K562 (cell line): ENCODE measurements at regions of chr3 and their contacts with region 1.

Region 1: DNA sequence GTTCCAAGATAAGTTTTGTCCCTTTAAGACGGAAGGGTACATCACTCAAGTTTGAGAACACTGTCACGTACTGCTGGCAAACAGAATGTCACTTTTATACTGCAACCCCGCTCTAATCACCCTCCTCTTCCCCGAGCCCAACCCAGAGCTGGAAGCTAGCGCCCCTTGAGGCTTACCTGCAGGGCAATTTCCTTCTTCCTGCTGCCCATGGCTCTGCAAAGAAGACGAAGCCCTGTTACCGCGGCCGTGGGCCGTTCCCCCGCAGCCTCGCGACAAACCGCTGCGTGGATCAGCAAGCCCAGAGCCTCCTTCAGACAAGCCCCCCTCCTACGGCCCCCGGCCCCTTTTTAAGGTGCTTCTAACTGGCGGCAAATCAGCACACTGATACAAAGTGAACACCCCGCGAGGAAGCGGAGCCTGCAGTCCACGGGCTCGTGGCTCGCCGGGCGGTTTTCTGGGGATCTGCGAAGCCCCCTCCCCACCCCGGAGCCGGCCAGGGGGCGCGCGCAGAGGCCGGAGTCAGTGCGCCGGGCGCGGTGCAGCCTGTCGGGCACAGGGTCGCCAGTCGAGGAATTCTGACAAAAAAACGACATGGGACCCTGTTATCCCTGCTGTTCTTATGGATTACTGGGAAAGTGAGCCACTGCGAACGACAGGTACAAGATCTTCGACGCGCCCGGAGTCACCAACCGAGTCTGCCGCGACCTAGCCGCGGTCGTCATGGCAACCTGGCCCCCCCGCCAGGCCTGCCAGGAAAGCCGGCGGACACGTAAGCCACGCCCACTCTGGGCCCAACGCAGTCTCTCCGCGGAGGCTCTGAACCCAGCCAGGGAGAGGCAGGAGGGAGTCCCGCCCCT is at the start of gene NME9:
- DNase-seq: peak; percentile 86 to 95 (median 92)
- ATAC-seq: peak; percentile 94
- H3K4me3 ChIP-seq: peak within 1 kb of the TSS; percentile 57
- H3K27ac ChIP-seq: no peak within 1 kb of the TSS
- H3K4me1 ChIP-seq: peaks cover 7 to 10% of the 10 kb centered on the region in 2 experiments; a peak in 4 of 5 replicates
- H3K27me3 ChIP-seq: no peaks in the 10 kb centered on the region; a peak in 1 of 5 replicates
- CTCF ChIP-seq: peak; percentile 59 to 72 (median 69)
- EP300 ChIP-seq: no peak
- POLR2A ChIP-seq: no peak
- RAD21 ChIP-seq: peak in 1 of 2 experiments; percentile 47; a peak in 2 of 4 replicates
- polyA plus RNA-seq, gene NME9: 0.13 to 0.15 TPM

Region 2: DNA sequence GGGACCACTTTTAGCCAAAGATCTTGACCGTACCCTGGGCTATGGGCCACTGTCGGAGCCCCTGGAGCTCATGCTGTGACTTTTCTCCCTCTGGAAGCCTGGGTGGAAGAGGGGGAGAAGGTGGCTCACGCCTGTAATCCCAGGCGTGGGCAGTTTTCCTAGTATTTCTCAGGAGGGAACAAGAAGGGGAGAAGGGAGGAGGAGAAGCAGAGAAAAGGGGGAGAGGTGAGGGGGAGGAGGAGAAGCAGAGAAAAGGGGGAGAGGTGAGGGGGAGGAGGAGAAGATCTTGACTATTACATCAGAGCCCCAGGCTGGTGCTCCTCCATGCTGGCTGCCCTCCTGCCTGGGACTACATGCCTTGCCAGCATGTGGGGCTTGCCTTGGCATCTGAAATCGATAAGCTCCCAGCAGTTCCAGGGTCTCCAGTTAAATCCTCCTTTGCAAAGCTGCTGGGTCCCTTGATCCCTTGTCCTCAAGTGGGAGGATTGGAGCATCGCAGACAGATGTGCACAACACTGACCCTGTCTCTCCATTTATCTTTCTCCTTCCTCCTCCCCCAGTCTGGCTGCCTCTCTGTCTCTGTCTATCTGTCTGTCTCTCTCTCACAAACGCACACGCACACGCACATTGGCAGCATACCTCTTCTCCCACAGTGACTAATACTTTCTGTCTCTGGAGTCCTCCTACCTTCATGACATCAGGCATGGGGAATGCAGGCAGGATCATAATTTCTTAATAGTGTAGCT is 60.7 kb after region 1 on chr3:
- CTCF ChIA-PET with region 1: no interaction called
- POLR2A ChIA-PET with region 1: no interaction called
- in situ Hi-C with region 1: no loop called
- intact Hi-C with region 1: loop called (anchors 10 kb)
- DNase-seq: no peak
- ATAC-seq: no peak; the same call in 2 of the 3 replicates
- H3K4me3 ChIP-seq: no peak overlapping the region
- H3K27ac ChIP-seq: no peak overlapping the region
- H3K4me1 ChIP-seq: no peaks in the 10 kb centered on the region
- H3K27me3 ChIP-seq: peaks cover 0 to 12% of the 10 kb centered on the region in 2 experiments; a peak in 1 of 5 replicates
- CTCF ChIP-seq: no peak
- EP300 ChIP-seq: no peak
- POLR2A ChIP-seq: no peak
- RAD21 ChIP-seq: no peak

Region 3: DNA sequence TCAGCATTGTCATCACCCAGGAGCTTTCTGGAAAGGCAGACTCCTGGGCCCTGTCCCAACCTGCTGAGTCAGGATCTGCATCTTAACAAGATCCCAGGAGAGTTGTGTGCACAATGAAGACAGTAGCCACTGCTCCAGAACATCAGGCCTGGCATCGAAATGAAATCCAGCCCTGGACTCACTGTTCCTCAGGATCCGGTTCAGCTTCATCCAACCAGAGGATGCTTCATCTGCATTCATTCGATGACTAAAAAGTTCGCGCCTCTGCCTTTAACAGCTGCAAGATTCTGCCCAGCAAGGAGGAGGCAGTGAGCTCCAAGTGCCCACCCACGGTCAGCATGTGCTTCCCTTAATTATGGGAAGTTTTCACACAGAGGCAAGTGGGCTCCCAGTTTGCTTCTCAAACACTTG is 79.4 kb after region 1 on chr3:
- CTCF ChIA-PET with region 1: no interaction called
- POLR2A ChIA-PET with region 1: no interaction called
- in situ Hi-C with region 1: no loop called
- intact Hi-C with region 1: loop called (anchors 5 kb)
- DNase-seq: no peak
- ATAC-seq: no peak
- H3K4me3 ChIP-seq: no peak overlapping the region
- H3K27ac ChIP-seq: no peak overlapping the region
- H3K4me1 ChIP-seq: peaks cover 5 to 12% of the 10 kb centered on the region in 2 experiments; a peak in 3 of 5 replicates
- H3K27me3 ChIP-seq: peaks cover 0 to 11% of the 10 kb centered on the region in 2 experiments; a peak in 2 of 5 replicates
- CTCF ChIP-seq: no peak
- EP300 ChIP-seq: no peak
- POLR2A ChIP-seq: no peak
- RAD21 ChIP-seq: no peak